Transverse colon (tissue), 4 donors: ENCODE measurements at regions of chr5 and their contacts with region 1.

Region 1: DNA sequence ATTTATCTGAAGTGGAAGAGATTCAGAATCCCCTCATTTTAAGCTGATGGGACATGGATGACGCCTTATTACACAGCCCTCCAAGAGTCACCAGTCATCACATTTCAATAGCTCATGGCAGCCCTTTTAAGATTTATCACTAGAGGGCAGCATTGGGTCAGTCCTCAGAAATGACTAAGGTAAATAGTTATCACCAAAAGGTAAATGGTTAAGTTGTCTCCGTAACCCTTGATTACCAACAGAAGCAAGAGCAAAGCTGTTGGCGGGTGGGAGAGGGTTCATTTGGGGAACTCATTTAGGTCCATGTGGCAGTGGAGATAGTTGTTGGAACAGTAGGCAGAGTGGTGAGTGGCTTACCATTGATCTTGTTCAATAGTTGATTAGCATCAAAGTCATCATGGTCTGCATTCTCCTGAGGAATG is 12.0 kb upstream of the C9 start:
- DNase-seq: peak; percentile 27
- H3K4me3 ChIP-seq: no peak overlapping the region
- H3K27ac ChIP-seq: no peak overlapping the region
- H3K4me1 ChIP-seq: peaks cover 0 to 9% (median 4%) of the 10 kb centered on the region in 4 donors
- H3K27me3 ChIP-seq: no peaks in the 10 kb centered on the region
- CTCF ChIP-seq: peak; percentile 69 to 81 (median 75)
- EP300 ChIP-seq: no peak
- POLR2A ChIP-seq: no peak

Region 2: DNA sequence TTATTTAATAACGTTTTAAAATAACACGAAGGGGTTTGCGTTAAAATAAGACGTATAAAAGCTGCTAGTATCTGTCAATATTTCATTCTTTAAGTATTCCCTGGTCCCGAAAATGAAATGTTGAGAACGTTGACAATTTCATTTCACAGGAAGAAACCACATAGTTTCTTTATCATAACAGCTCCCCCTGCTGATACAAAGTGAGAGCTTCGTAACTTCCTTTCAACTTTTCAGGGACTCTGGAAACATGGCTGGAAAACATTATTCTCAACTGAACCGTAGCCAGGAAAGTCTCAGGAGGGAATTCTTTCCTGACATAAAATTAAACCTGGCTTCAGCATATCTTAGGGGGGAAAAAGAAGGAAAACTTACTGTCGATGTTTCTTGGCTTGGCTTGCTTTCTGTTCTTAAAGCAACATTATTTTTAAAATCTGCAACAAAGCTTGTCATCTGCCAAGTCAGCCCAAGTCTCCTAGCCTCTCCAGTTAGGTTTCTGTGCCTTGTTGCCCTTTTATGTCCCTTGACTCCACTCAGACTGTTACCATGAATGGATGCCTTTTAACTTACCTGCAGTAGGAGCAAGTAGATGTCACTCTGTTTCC is 171.3 kb after region 1 on chr5:
- in situ Hi-C with region 1: loop called (anchors 5 to 10 kb)
- intact Hi-C with region 1: loop called (anchors 5 kb)
- DNase-seq: peak; percentile 27
- H3K4me3 ChIP-seq: no peak overlapping the region
- H3K27ac ChIP-seq: peak overlapping the region in 1 of 4 donors; percentile 3
- H3K4me1 ChIP-seq: peaks cover 0 to 21% (median 3%) of the 10 kb centered on the region in 4 donors
- H3K27me3 ChIP-seq: no peaks in the 10 kb centered on the region
- CTCF ChIP-seq: peak; percentile 64 to 89 (median 72)
- EP300 ChIP-seq: no peak
- POLR2A ChIP-seq: no peak